Activated T-helper 2 cell treated with anti-CD3 and anti-CD28 coated beads, Interferon-gamma antibody, Interleukin-2, Interleukin-4, amounts not matched to agents 10 μg/mL and 5 μg/mL and 100 μg/mL, durations not matched to agents 14 hours and 24 hours and 36 hours (primary cell): ENCODE measurements at regions of chr4 and their contacts with region 1.

Region 1: GRCh38 chr4:122922877-122923511 is 597 bp upstream of the NUDT6 start:
- DNase-seq: peak; percentile 88
- H3K4me3 Mint-ChIP-seq: peak overlapping the region; percentile 95
- H3K27ac Mint-ChIP-seq: peak overlapping the region; percentile 97
- H3K4me1 Mint-ChIP-seq: peaks cover 15% of the 10 kb centered on the region
- H3K27me3 Mint-ChIP-seq: no peaks in the 10 kb centered on the region

Region 2: DNA sequence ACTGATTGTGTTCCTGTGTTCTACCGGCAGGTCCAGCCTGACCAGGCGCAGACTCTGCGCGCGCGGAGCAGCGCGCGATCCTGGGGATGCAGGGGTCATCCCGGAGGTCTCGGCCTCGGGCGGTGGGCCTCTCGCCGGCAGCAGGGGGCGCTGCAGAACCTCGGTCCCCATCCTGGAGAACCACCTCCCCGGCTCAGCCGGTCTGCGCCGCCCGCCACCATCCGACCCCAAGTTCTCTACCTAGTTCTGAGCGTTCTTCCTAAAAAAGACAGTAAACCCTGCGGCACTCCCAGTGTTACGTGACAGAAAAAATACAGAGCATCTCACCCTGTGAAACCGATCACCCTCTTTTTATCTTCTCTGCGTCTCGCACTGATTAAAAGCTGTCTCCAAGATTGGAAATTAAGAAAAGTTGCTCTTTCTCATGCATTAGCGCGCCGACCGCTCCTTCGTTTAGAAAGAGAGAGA is 972.7 kb before region 1 on chr4:
- intact Hi-C with region 1: loop called (anchors 1 kb)
- DNase-seq: peak; percentile 71
- H3K4me3 Mint-ChIP-seq: peak overlapping the region; percentile 82
- H3K27ac Mint-ChIP-seq: no peak overlapping the region
- H3K4me1 Mint-ChIP-seq: peaks cover 14% of the 10 kb centered on the region
- H3K27me3 Mint-ChIP-seq: peaks cover 63% of the 10 kb centered on the region

Region 3: GRCh38 chr4:122542411-122543236 is 380.4 kb before region 1 on chr4:
- intact Hi-C with region 1: loop called (anchors 5 kb)
- DNase-seq: no peak
- H3K4me3 Mint-ChIP-seq: peak overlapping the region; percentile 53
- H3K27ac Mint-ChIP-seq: peak overlapping the region; percentile 87
- H3K4me1 Mint-ChIP-seq: peaks cover 74% of the 10 kb centered on the region
- H3K27me3 Mint-ChIP-seq: peaks cover 1% of the 10 kb centered on the region

Region 4: GRCh38 chr4:122602277-122603142 is 320.5 kb before region 1 on chr4:
- intact Hi-C with region 1: loop called (anchors 1 kb)
- DNase-seq: no peak
- H3K4me3 Mint-ChIP-seq: peak overlapping the region; percentile 35
- H3K27ac Mint-ChIP-seq: peak overlapping the region; percentile 31
- H3K4me1 Mint-ChIP-seq: peaks cover 18% of the 10 kb centered on the region
- H3K27me3 Mint-ChIP-seq: peaks cover 16% of the 10 kb centered on the region

Region 5: GRCh38 chr4:122732329-122733026 is 190.5 kb before region 1 on chr4 and contains the start of gene BBS12:
- intact Hi-C with region 1: loop called (anchors 1 kb)
- DNase-seq: peak; percentile 99
- H3K4me3 Mint-ChIP-seq: peak within 1 kb of the TSS; percentile 95
- H3K27ac Mint-ChIP-seq: peak within 1 kb of the TSS; percentile 92
- H3K4me1 Mint-ChIP-seq: peaks cover 14% of the 10 kb centered on the region
- H3K27me3 Mint-ChIP-seq: no peaks in the 10 kb centered on the region
- total RNA-seq, gene BBS12: 3.7 and 5.5 TPM in 2 replicates

Region 6: GRCh38 chr4:122758033-122758432 is 165.0 kb before region 1 on chr4:
- intact Hi-C with region 1: loop called (anchors 2 kb)
- DNase-seq: no peak
- H3K4me3 Mint-ChIP-seq: no peak overlapping the region
- H3K27ac Mint-ChIP-seq: no peak overlapping the region
- H3K4me1 Mint-ChIP-seq: peaks cover 15% of the 10 kb centered on the region
- H3K27me3 Mint-ChIP-seq: peaks cover 23% of the 10 kb centered on the region

Region 7: GRCh38 chr4:122980860-122981259 is 57.9 kb after region 1 on chr4:
- intact Hi-C with region 1: no loop called
- DNase-seq: no peak
- H3K4me3 Mint-ChIP-seq: no peak overlapping the region
- H3K27ac Mint-ChIP-seq: no peak overlapping the region
- H3K4me1 Mint-ChIP-seq: no peaks in the 10 kb centered on the region
- H3K27me3 Mint-ChIP-seq: no peaks in the 10 kb centered on the region

Region 8: GRCh38 chr4:123158576-123158975 is 235.6 kb after region 1 on chr4:
- intact Hi-C with region 1: no loop called
- DNase-seq: no peak
- H3K4me3 Mint-ChIP-seq: no peak overlapping the region
- H3K27ac Mint-ChIP-seq: no peak overlapping the region
- H3K4me1 Mint-ChIP-seq: no peaks in the 10 kb centered on the region
- H3K27me3 Mint-ChIP-seq: no peaks in the 10 kb centered on the region